K562 (cell line): ENCODE measurements at regions of chr18 and their contacts with region 1.

Region 1: GRCh38 chr18:21179590-21180220 is 62.3 kb upstream of the GREB1L start:
- DNase-seq: peak; percentile 48 to 68 (median 50)
- ATAC-seq: peak; percentile 88
- H3K4me3 ChIP-seq: no peak overlapping the region
- H3K27ac ChIP-seq: no peak overlapping the region
- H3K4me1 ChIP-seq: no peaks in the 10 kb centered on the region
- H3K27me3 ChIP-seq: no peaks in the 10 kb centered on the region
- CTCF ChIP-seq: peak; percentile 66 to 76 (median 70)
- EP300 ChIP-seq: no peak
- POLR2A ChIP-seq: no peak
- RAD21 ChIP-seq: peak; percentile 58 to 86

Region 2: DNA sequence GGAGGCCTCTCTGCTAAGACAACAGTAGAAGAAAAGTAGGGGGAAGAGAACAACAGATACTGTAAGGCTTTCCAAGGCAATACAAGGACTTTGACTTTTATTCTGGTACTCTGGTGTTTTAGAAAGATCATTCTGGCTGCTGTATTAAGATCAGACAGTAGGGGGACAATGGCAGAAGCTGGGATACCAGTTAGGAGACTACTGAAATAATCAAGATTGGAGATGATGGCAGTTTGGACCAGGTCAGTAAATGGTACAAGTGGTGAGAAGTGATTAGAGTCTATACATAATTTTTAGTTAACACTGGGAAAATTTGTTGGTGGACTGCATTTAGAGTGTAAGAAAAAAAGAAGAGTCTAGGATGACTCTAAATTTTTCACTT is 207.8 kb before region 1 on chr18:
- CTCF ChIA-PET with region 1: no interaction called
- POLR2A ChIA-PET with region 1: no interaction called
- in situ Hi-C with region 1: no loop called
- intact Hi-C with region 1: loop called (anchors 10 kb)
- DNase-seq: peak; percentile 15 to 25 (median 22)
- ATAC-seq: peak; percentile 80
- H3K4me3 ChIP-seq: no peak overlapping the region
- H3K27ac ChIP-seq: no peak overlapping the region
- H3K4me1 ChIP-seq: no peaks in the 10 kb centered on the region
- H3K27me3 ChIP-seq: no peaks in the 10 kb centered on the region
- CTCF ChIP-seq: peak; percentile 28 to 45 (median 39); a peak in 4 of 6 replicates
- EP300 ChIP-seq: no peak
- POLR2A ChIP-seq: no peak
- RAD21 ChIP-seq: peak in 1 of 2 experiments; percentile 11; a peak in 1 of 4 replicates